HepG2 (cell line): ENCODE measurements at regions of chr2 and their contacts with region 1.

Region 1: DNA sequence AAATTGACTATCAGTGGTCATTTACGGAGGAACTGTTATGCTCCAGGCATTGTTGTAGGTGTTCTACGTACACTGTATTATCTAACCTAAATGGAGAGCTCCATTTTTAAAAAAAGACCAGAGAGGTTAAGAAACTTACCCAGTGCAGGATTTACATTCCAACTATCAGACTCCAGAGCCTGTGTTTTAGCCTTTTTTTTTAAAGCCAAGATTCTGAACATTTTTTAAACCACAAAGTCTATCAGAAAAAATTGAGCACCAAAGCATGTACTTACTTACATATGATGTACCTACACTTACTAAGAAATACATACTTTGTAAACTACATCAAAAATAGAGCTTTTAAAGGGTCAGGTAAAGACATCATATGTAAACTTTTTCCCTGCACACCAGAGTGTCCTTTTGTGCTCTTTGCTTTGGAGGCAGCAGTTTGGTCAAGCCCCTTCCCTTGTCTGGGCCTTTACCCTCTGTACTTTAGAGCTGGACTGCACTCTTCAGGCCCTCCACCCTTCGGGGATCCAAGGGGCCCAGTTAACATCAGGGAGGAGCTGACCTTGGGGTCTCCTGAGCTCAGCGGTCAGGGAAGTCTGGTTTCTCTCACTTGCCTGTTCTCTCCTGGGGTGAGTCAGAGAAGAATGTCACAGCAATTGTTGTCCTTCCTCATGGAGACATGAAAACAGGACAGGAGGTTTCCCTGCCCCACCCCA is 58.4 kb downstream of the ITGB1BP1 start:
- DNase-seq: peak; percentile 79
- ATAC-seq: peak; percentile 95
- H3K4me3 ChIP-seq: no peak overlapping the region
- H3K27ac ChIP-seq: peak overlapping the region; percentile 41
- H3K4me1 ChIP-seq: peaks cover 28% of the 10 kb centered on the region
- H3K27me3 ChIP-seq: no peaks in the 10 kb centered on the region
- CTCF ChIP-seq: no peak
- EP300 ChIP-seq: peak in 1 of 2 experiments; percentile 63; a peak in 1 of 4 replicates
- POLR2A ChIP-seq: no peak
- RAD21 ChIP-seq: no peak

Region 2: DNA sequence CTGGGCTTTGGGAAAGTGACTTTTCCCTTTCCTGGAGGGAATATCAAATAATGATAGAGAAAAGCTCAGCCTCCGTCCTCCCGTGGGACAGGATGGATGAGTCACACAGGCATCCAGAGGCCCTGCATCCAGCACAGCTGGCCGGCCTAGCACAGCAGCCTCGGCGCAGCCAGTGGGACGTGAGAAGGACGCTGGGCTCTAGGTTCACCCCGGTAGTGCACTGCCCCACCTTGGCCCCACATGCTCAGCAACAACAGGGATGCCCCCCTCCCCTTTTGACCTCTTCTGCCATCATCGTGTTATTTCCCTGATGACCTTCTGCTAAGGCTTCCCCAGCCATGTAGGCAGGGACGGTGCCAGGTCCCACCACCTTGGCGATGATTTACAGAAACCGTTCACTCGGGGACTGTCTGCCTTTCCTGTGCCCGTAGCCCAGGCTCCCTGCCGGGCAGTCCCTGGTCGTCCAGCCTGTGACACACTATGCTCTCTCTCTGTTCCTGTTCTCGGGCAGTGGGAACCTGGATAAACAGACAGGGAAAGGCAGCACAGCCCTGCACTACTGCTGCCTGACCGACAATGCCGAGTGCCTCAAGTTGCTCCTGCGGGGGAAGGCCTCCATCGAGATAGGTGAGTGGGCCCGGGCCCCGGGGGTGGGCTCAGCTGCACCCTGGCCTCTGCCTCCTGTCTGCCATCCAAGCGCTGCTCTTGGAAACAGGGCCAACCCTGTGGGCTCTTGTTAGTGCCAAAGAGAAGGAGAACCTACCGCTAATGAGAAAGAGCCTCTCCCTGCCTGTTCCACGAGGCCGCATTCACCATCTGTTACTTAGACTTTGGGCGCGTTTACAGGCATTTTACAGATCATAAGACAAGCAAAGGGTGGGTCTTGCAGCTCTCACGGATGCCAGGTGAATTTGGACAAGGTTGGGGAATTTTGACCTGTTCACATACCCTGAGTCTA is 13.8 kb after region 1 on chr2:
- CTCF ChIA-PET with region 1: no interaction called
- POLR2A ChIA-PET with region 1: interaction called, 10 read pairs
- in situ Hi-C with region 1: no loop called
- intact Hi-C with region 1: no loop called
- DNase-seq: no peak
- ATAC-seq: peak; percentile 29; the same call in 1 of the 3 replicates
- H3K4me3 ChIP-seq: no peak overlapping the region
- H3K27ac ChIP-seq: no peak overlapping the region
- H3K4me1 ChIP-seq: peaks cover 46% of the 10 kb centered on the region
- H3K27me3 ChIP-seq: no peaks in the 10 kb centered on the region
- CTCF ChIP-seq: no peak
- EP300 ChIP-seq: no peak
- POLR2A ChIP-seq: no peak
- RAD21 ChIP-seq: no peak

Region 3: DNA sequence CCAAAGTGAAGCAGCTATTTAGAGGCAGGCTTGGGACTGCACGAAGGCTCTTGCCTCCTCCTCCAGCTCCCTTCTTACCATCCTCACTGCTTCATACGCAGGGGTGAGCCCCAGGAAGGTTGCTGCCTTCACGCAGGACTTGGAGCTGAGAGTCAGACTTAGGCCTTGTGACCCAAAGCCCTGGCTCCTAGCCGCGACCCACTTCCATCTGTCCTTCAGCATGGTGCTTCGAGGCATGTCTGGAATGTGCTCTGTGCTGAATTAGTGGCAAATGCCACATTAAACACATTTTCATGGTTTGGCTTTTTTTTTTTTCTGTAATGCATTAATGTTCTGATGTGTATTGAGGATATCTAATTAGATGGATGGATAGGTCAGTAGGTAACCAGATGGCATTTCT is 20.9 kb after region 1 on chr2:
- CTCF ChIA-PET with region 1: no interaction called
- POLR2A ChIA-PET with region 1: interaction called, 20 read pairs
- in situ Hi-C with region 1: no loop called
- intact Hi-C with region 1: no loop called
- DNase-seq: no peak
- ATAC-seq: no peak
- H3K4me3 ChIP-seq: no peak overlapping the region
- H3K27ac ChIP-seq: peak overlapping the region; percentile 54
- H3K4me1 ChIP-seq: peaks cover 72% of the 10 kb centered on the region
- H3K27me3 ChIP-seq: no peaks in the 10 kb centered on the region
- CTCF ChIP-seq: no peak
- EP300 ChIP-seq: no peak
- POLR2A ChIP-seq: no peak
- RAD21 ChIP-seq: no peak